ENCODE measurements at regions of chr12 and their contacts with region 1.

Region 1: DNA sequence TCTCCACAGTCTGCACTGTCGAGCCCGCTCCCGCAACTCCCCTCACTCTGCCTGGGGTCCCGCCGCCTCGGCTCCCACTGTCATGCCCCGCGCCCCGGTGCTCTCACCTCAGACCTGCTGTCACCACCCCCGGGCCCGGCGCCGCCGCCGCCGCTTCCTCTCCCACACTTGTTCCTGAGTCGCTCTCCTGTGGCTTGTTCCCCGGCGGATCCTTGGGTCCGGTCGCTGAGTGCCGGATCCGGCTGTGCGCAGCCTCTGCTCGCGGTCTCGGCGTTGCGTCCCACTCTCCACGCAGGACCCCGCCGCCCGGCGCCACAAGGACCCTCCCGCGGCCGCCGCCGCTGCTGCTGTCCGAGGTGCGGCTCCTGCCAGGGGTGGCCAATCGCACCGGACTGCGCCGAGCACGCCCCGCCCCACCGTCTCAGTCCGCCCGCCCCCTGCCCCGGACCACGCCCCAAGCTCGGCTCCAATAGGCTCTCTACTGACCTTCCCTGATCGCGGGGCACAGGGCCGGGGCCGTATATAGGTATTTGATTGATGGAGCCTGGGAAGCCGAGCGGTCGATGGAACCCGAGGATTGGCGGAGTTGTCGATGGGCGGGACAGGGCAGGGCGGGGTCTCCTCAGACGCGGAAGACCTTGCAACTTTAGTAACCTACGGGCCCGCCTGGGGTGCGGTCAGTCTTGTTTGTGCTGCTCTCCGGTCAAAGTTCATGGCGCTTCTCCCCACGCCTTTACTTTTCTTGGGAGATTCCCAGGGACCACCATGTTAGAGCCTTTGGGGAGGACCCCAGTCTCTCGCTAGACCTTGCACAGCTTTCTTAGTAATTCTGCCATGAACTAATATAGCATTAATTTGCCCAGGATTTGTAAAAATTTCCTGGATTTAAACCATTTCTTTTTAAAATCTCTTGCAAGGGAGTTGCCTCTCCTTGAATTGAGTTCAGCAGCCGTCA is at the start of gene TAOK3:
- DNase-seq: peak; percentile 98
- H3K4me3 ChIP-seq: peak within 1 kb of the TSS; percentile 97
- H3K27ac ChIP-seq: no peak within 1 kb of the TSS
- H3K4me1 ChIP-seq: peaks cover 27% of the 10 kb centered on the region
- CTCF ChIP-seq: no peak
- total RNA-seq, gene TAOK3: 30.7 and 48.4 TPM in 2 replicates

Region 2: GRCh38 chr12:117919479-117919878 is 453.3 kb before region 1 on chr12:
- CTCF ChIA-PET with region 1: interaction called, 10 read pairs
- POLR2A ChIA-PET with region 1: no interaction called
- intact Hi-C with region 1: no loop called
- DNase-seq: no peak
- H3K4me3 ChIP-seq: no peak overlapping the region
- H3K27ac ChIP-seq: no peak overlapping the region
- H3K4me1 ChIP-seq: no peaks in the 10 kb centered on the region
- CTCF ChIP-seq: no peak

Region 3: DNA sequence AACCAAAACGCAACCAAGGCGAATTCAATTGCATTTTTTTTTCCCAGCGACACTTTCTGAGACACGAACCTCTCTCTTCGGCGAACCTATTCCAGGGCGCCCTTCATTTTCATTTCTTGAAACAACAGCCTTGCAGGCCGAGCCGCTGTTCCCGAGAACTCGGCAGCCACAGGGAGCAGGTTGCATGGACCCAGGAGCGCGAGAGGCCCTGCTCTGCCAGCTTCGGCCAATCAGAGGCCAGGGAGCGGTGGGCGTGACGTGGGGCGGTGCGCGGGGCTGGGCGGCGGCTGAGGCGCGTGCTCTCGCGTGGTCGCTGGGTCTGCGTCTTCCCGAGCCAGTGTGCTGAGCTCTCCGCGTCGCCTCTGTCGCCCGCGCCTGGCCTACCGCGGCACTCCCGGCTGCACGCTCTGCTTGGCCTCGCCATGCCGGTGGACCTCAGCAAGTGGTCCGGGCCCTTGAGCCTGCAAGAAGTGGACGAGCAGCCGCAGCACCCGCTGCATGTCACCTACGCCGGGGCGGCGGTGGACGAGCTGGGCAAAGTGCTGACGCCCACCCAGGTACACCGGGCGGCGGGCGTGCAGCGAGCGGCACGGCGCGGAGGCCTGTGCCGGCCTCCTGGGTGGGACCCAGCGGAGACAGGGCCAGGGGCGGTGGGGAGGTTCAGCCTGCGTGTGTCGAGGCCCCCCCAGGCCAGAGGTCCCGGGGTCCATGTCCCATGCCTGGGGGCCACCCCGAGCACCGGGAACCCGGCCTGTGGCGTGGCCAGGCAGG is 236.8 kb before region 1 on chr12 and contains the start of gene PEBP1:
- CTCF ChIA-PET with region 1: no interaction called
- POLR2A ChIA-PET with region 1: no interaction called
- intact Hi-C with region 1: loop called (anchors 5 kb)
- DNase-seq: peak; percentile 90
- H3K4me3 ChIP-seq: peak within 1 kb of the TSS; percentile 96
- H3K27ac ChIP-seq: peak within 1 kb of the TSS; percentile 14
- H3K4me1 ChIP-seq: peaks cover 18% of the 10 kb centered on the region
- CTCF ChIP-seq: no peak
- total RNA-seq, gene PEBP1: 128 and 135 TPM in 2 replicates

Region 4: GRCh38 chr12:118183705-118184104 is 189.1 kb before region 1 on chr12:
- CTCF ChIA-PET with region 1: interaction called, 12 read pairs
- POLR2A ChIA-PET with region 1: interaction called, 9 read pairs
- intact Hi-C with region 1: loop called (anchors 1 kb)
- DNase-seq: no peak
- H3K4me3 ChIP-seq: no peak overlapping the region
- H3K27ac ChIP-seq: no peak overlapping the region
- H3K4me1 ChIP-seq: peaks cover 21% of the 10 kb centered on the region
- CTCF ChIP-seq: no peak

Region 5: DNA sequence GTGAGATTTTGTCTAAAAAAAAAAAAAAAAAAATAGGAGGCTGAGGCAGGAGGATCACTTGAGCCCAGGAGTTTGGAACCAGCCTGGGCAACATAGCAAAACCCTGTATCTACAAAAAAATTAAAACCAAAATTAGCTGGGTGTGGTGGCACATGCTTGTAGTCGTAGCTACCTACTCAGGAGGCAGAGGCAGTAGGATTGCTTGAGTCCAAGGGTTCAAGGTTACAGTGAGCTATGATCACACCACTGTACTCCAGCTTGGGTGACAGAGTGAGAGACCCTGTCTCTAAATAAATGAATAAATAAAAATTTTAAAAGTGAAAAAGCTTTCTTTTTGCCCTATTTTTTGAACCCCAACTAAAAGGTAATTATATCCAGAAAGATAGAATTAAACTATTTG is 123.3 kb before region 1 on chr12:
- CTCF ChIA-PET with region 1: no interaction called
- POLR2A ChIA-PET with region 1: no interaction called
- intact Hi-C with region 1: no loop called
- DNase-seq: no peak
- H3K4me3 ChIP-seq: no peak overlapping the region
- H3K27ac ChIP-seq: no peak overlapping the region
- H3K4me1 ChIP-seq: no peaks in the 10 kb centered on the region
- CTCF ChIP-seq: no peak

Region 6: DNA sequence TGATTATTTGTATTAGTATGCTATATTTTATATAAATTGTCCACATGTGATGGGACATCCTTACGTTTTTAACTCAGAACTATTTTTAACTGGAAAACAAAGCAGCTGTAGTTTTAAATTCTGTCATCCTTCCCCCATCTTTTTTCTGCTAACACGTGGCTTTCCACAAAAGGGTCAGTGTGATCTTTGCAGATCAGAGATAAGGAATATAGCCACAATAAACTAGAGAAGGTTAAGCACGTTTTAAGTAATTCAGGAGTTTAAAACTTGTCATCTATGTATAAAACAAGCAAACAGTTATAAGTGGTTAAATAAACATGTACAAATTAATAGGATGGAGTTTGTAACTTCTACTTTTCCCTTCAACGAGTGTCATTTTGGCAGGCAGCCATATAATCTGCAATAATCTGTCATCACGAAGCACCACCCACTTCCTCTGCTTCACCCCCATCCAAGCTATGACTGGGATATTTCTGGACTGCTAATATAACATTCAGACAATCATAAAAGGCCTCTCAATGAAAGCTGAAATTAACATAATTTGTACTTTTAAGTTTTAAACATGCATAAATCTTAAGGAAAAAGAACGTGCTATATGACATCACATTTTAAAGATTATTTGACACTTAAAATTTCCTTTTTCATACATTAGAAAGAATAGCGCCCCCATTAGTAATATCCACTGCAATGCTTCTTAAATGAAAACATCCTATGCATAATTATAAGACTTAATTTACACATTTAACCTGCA is 15.4 kb before region 1 on chr12:
- CTCF ChIA-PET with region 1: interaction called, 3 read pairs
- POLR2A ChIA-PET with region 1: interaction called, 21 read pairs
- intact Hi-C with region 1: no loop called
- DNase-seq: peak; percentile 80
- H3K4me3 ChIP-seq: peak overlapping the region; percentile 75
- H3K27ac ChIP-seq: peak overlapping the region; percentile 70
- H3K4me1 ChIP-seq: peaks cover 30% of the 10 kb centered on the region
- CTCF ChIP-seq: peak; percentile 88

Region 7: GRCh38 chr12:118480235-118480634 is 107.4 kb after region 1 on chr12:
- CTCF ChIA-PET with region 1: no interaction called
- POLR2A ChIA-PET with region 1: no interaction called
- intact Hi-C with region 1: no loop called
- DNase-seq: no peak
- H3K4me3 ChIP-seq: no peak overlapping the region
- H3K27ac ChIP-seq: no peak overlapping the region
- H3K4me1 ChIP-seq: no peaks in the 10 kb centered on the region
- CTCF ChIP-seq: no peak

Measured in OCI-LY7 (cell line).